CD8-positive, alpha-beta memory T cell (primary cell): ENCODE measurements at regions of chr2 and their contacts with region 1.

Region 1: GRCh38 chr2:69565431-69565839 is 78.1 kb downstream of the AAK1 start:
- DNase-seq: peak; percentile 43 to 73 (median 58)
- H3K4me3 ChIP-seq: no peak overlapping the region
- H3K4me3 Mint-ChIP-seq: peak overlapping the region in 6 of 7 donors; percentile 41 to 62 (median 56)
- H3K27ac ChIP-seq: no peak overlapping the region
- H3K27ac Mint-ChIP-seq: peak overlapping the region; percentile 74 to 95 (median 88)
- H3K4me1 ChIP-seq: peaks cover 75% of the 10 kb centered on the region
- H3K4me1 Mint-ChIP-seq: peaks cover 89 to 95% (median 91%) of the 10 kb centered on the region in 3 donors
- H3K27me3 ChIP-seq: no peaks in the 10 kb centered on the region
- H3K27me3 Mint-ChIP-seq: no peaks in the 10 kb centered on the region

Region 2: GRCh38 chr2:69436938-69437750 is 128.3 kb before region 1 on chr2 and contains the start of gene NFU1:
- CTCF ChIA-PET with region 1: interaction called, 11 read pairs
- POLR2A ChIA-PET with region 1: no interaction called
- DNase-seq: peak; percentile 77 to 94 (median 91)
- H3K4me3 ChIP-seq: peak within 1 kb of the TSS; percentile 73
- H3K4me3 Mint-ChIP-seq: peak within 1 kb of the TSS; percentile 92 to 99 (median 99)
- H3K27ac ChIP-seq: peak within 1 kb of the TSS; percentile 91
- H3K27ac Mint-ChIP-seq: peak within 1 kb of the TSS; percentile 96 to 100 (median 98)
- H3K4me1 ChIP-seq: peaks cover 23% of the 10 kb centered on the region
- H3K4me1 Mint-ChIP-seq: peaks cover 33 to 55% (median 43%) of the 10 kb centered on the region in 3 donors
- H3K27me3 ChIP-seq: no peaks in the 10 kb centered on the region
- H3K27me3 Mint-ChIP-seq: no peaks in the 10 kb centered on the region
- total RNA-seq, gene NFU1: 40.4 to 43.2 TPM

Region 3: DNA sequence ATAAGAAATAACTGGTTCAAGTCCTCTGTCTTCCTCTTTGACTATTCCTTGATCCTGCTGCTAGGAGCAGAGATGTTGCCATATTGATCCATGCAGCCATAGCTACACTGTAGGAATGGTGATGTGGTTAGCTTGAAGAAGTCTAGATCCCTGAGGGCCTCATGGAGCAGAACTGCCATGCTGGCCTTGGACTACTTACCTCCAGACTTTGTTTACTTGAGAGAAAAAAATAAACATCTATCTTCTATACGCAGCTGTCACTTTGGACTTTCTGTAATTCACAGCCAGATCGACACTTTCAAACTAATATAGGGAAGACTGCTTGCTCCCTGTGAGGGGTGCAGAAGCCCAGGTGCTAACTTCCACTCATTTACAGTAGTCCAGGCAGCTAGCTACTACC is 43.7 kb before region 1 on chr2:
- CTCF ChIA-PET with region 1: no interaction called
- POLR2A ChIA-PET with region 1: no interaction called
- DNase-seq: no peak
- H3K4me3 ChIP-seq: no peak overlapping the region
- H3K4me3 Mint-ChIP-seq: no peak overlapping the region
- H3K27ac ChIP-seq: no peak overlapping the region
- H3K27ac Mint-ChIP-seq: peak overlapping the region in 7 of 8 donors; percentile 8 to 85 (median 43)
- H3K4me1 ChIP-seq: no peaks in the 10 kb centered on the region
- H3K4me1 Mint-ChIP-seq: peaks cover 7 to 13% (median 8%) of the 10 kb centered on the region in 3 donors
- H3K27me3 ChIP-seq: no peaks in the 10 kb centered on the region
- H3K27me3 Mint-ChIP-seq: no peaks in the 10 kb centered on the region

Region 4: DNA sequence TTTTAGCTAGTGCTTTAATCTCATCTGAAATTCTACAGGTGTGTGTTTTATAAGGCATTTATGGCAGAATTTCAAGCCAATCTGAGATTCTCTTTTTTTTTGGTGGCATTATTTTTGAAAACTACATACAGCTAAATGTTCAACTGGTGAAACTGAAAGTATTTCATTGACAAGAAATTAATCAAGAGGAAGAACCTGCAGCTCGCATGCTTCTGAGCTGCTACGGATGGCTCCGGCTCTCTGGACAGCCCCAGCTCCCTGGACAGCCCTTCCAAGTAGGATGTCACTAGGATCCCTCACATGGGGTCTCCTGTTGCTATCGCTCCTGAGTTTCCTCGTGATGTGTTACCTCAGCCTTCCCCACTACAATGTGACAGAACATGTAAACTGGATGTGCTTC is 31.7 kb after region 1 on chr2:
- CTCF ChIA-PET with region 1: interaction called, 10 read pairs
- POLR2A ChIA-PET with region 1: no interaction called
- DNase-seq: no peak
- H3K4me3 ChIP-seq: no peak overlapping the region
- H3K4me3 Mint-ChIP-seq: peak overlapping the region in 6 of 7 donors; percentile 16 to 84 (median 36)
- H3K27ac ChIP-seq: no peak overlapping the region
- H3K27ac Mint-ChIP-seq: peak overlapping the region; percentile 10 to 63 (median 44)
- H3K4me1 ChIP-seq: peaks cover 84% of the 10 kb centered on the region
- H3K4me1 Mint-ChIP-seq: peaks cover 73 to 94% (median 91%) of the 10 kb centered on the region in 3 donors
- H3K27me3 ChIP-seq: no peaks in the 10 kb centered on the region
- H3K27me3 Mint-ChIP-seq: no peaks in the 10 kb centered on the region

Region 5: DNA sequence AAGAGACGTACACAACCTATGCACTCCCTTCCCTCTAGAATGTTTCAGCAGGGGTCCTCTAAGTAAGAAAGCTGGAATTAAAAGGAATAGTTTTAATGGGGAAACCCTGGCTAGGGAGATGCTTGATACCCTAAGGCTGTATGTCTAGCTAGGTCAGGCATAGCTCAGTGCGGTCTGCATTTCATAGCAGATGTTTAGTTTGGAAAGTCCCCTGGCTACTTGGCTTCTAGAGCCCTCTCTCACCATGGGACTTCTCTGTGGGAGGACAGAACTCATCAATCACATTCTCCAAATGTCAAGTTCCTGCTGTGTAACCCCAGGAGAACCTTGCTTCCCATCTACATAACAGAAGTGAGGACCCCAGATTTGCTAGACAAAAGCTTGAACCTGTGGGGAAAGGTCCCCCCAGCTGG is 152.4 kb after region 1 on chr2:
- CTCF ChIA-PET with region 1: interaction called, 25 read pairs
- POLR2A ChIA-PET with region 1: no interaction called
- DNase-seq: no peak
- H3K4me3 ChIP-seq: no peak overlapping the region
- H3K4me3 Mint-ChIP-seq: no peak overlapping the region
- H3K27ac ChIP-seq: no peak overlapping the region
- H3K27ac Mint-ChIP-seq: no peak overlapping the region
- H3K4me1 ChIP-seq: peaks cover 7% of the 10 kb centered on the region
- H3K4me1 Mint-ChIP-seq: peaks cover 9 to 12% (median 12%) of the 10 kb centered on the region in 3 donors
- H3K27me3 ChIP-seq: no peaks in the 10 kb centered on the region
- H3K27me3 Mint-ChIP-seq: peaks cover 0 to 3% of the 10 kb centered on the region in 2 donors

Region 6: GRCh38 chr2:69893684-69894551 is 328.5 kb after region 1 on chr2 and contains the start of gene SNRNP27:
- CTCF ChIA-PET with region 1: no interaction called
- POLR2A ChIA-PET with region 1: interaction called, 10 read pairs
- DNase-seq: peak; percentile 66 to 85 (median 75)
- H3K4me3 ChIP-seq: peak within 1 kb of the TSS; percentile 75
- H3K4me3 Mint-ChIP-seq: peak within 1 kb of the TSS; percentile 97 to 100 (median 100)
- H3K27ac ChIP-seq: peak within 1 kb of the TSS; percentile 84
- H3K27ac Mint-ChIP-seq: peak within 1 kb of the TSS; percentile 92 to 99 (median 98)
- H3K4me1 ChIP-seq: peaks cover 27% of the 10 kb centered on the region
- H3K4me1 Mint-ChIP-seq: peaks cover 39 to 57% (median 46%) of the 10 kb centered on the region in 3 donors
- H3K27me3 ChIP-seq: no peaks in the 10 kb centered on the region
- H3K27me3 Mint-ChIP-seq: peaks cover 0 to 2% of the 10 kb centered on the region in 2 donors
- total RNA-seq, gene SNRNP27: 59.6 to 61.2 TPM